H1 (cell line): ENCODE measurements at regions of chr22 and their contacts with region 1.

Region 1: GRCh38 chr22:32130464-32130863 is 28.6 kb downstream of the C22orf42 start:
- DNase-seq: no peak
- H3K4me3 ChIP-seq: no peak overlapping the region
- H3K27ac ChIP-seq: no peak overlapping the region
- H3K4me1 ChIP-seq: no peaks in the 10 kb centered on the region
- H3K27me3 ChIP-seq: no peaks in the 10 kb centered on the region
- CTCF ChIP-seq: no peak
- EP300 ChIP-seq: no peak
- POLR2A ChIP-seq: no peak
- RAD21 ChIP-seq: no peak

Region 2: GRCh38 chr22:32144496-32145274 is 14.2 kb after region 1 on chr22:
- CTCF ChIA-PET with region 1: interaction called, 20 read pairs
- POLR2A ChIA-PET with region 1: no interaction called
- DNase-seq: peak in 1 of 2 experiments; percentile 23
- H3K4me3 ChIP-seq: no peak overlapping the region
- H3K27ac ChIP-seq: no peak overlapping the region
- H3K4me1 ChIP-seq: no peaks in the 10 kb centered on the region
- H3K27me3 ChIP-seq: no peaks in the 10 kb centered on the region
- CTCF ChIP-seq: no peak
- EP300 ChIP-seq: no peak
- POLR2A ChIP-seq: no peak
- RAD21 ChIP-seq: no peak